ENCODE measurements at regions of chr1 and their contacts with region 1.

Region 1: DNA sequence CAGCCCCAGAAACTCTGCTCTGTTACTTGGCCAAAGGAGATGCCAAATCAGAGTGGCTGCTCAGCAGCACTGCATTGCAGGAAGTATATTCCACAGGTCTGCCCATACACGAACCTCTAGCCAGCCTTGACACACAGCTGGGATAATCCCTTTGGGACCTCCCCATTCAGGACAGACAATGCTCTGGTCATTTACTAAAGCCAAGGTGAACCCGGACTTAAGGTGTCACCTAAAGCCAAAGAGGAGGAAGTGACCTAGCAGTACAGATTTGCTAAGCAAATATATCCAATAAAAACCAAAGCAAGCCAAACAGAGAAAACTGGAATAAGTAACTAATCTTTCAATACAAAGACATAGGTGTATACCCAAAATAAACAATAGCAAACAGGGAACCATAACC is 27.7 kb downstream of the COPA start:
- H3K4me3 Mint-ChIP-seq: no peak overlapping the region
- H3K27ac Mint-ChIP-seq: no peak overlapping the region
- H3K4me1 Mint-ChIP-seq: peaks cover 12% of the 10 kb centered on the region
- H3K27me3 Mint-ChIP-seq: no peaks in the 10 kb centered on the region

Region 2: GRCh38 chr1:160238408-160238807 is 77.0 kb before region 1 on chr1:
- intact Hi-C with region 1: loop called (anchors 10 kb)
- H3K4me3 Mint-ChIP-seq: no peak overlapping the region
- H3K27ac Mint-ChIP-seq: no peak overlapping the region
- H3K4me1 Mint-ChIP-seq: no peaks in the 10 kb centered on the region
- H3K27me3 Mint-ChIP-seq: no peaks in the 10 kb centered on the region

Region 3: GRCh38 chr1:160284782-160285344 is 30.5 kb before region 1 on chr1 and contains the start of gene PEX19:
- intact Hi-C with region 1: no loop called
- H3K4me3 Mint-ChIP-seq: peak within 1 kb of the TSS; percentile 99
- H3K27ac Mint-ChIP-seq: peak within 1 kb of the TSS; percentile 93
- H3K4me1 Mint-ChIP-seq: peaks cover 25% of the 10 kb centered on the region
- H3K27me3 Mint-ChIP-seq: no peaks in the 10 kb centered on the region